ENCODE measurements at regions of chr12 and their contacts with region 1.

Region 1: DNA sequence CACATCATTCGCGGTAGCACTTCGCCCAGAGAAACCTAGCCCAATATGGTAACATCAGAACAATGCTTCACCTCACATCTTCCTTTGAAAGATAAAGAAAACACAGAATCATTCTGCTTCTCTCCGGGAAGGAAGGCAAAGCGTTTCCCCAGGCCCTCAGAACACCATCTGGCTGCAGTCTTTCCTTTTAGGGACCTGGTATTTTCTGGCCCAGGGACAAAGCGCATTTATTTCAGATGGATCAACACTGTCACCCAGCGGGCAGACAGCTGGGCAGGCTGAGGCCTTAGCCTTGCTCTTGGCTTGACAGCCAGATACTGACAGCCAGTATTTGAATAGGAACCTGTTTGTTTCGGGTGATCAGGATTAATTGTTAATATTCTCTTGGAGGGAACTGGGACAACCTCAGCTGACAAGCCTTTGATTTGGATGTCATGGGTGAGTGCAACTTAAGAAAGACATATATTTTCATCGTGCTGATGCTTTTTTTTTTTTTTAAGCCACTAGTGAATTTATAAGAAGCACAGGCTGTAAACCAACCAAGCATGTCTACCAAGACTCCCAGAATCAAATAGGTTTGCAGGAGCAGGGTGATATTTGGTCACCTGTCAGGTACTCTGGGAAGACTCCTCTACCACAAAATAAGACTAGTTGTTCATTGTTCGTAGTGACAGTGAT is 118.9 kb downstream of the VEZT start:
- DNase-seq: peak; percentile 84
- H3K4me3 ChIP-seq: no peak overlapping the region
- H3K27ac ChIP-seq: peak overlapping the region; percentile 36 to 57
- H3K4me1 ChIP-seq: no peaks in the 10 kb centered on the region
- H3K27me3 ChIP-seq: no peaks in the 10 kb centered on the region
- CTCF ChIP-seq: peak; percentile 84 to 97 (median 87)
- POLR2A ChIP-seq: no peak

Region 2: DNA sequence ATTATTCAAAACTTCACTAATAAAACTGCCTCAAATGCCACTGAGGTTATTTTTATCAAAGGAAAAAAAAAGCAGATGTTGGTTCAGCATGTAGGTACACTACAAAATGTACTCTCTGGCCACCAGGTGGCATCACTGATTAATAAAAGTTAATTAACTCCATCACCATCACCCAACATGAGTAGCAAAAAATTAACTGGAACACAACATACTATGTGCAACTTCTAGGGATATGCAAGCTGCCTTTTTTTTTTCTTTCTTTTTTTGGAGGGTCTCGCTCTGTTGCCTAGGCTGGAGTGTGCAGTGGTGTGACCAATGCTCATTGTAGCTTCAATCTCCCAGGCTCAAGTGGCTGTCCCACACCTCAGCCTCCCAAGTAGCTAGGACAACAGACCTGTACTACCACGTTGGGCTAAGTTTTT is 219.3 kb before region 1 on chr12:
- intact Hi-C with region 1: loop called (anchors 2 kb)
- DNase-seq: peak; percentile 78
- H3K4me3 ChIP-seq: no peak overlapping the region
- H3K27ac ChIP-seq: peak overlapping the region; percentile 30 to 36
- H3K4me1 ChIP-seq: peaks cover 3% of the 10 kb centered on the region
- H3K27me3 ChIP-seq: no peaks in the 10 kb centered on the region
- CTCF ChIP-seq: peak; percentile 47 to 93 (median 88)
- POLR2A ChIP-seq: no peak

Region 3: GRCh38 chr12:95277139-95277538 is 59.4 kb before region 1 on chr12:
- intact Hi-C with region 1: no loop called
- DNase-seq: no peak
- H3K4me3 ChIP-seq: no peak overlapping the region
- H3K27ac ChIP-seq: no peak overlapping the region
- H3K4me1 ChIP-seq: no peaks in the 10 kb centered on the region
- H3K27me3 ChIP-seq: no peaks in the 10 kb centered on the region
- CTCF ChIP-seq: no peak
- POLR2A ChIP-seq: no peak

Region 4: DNA sequence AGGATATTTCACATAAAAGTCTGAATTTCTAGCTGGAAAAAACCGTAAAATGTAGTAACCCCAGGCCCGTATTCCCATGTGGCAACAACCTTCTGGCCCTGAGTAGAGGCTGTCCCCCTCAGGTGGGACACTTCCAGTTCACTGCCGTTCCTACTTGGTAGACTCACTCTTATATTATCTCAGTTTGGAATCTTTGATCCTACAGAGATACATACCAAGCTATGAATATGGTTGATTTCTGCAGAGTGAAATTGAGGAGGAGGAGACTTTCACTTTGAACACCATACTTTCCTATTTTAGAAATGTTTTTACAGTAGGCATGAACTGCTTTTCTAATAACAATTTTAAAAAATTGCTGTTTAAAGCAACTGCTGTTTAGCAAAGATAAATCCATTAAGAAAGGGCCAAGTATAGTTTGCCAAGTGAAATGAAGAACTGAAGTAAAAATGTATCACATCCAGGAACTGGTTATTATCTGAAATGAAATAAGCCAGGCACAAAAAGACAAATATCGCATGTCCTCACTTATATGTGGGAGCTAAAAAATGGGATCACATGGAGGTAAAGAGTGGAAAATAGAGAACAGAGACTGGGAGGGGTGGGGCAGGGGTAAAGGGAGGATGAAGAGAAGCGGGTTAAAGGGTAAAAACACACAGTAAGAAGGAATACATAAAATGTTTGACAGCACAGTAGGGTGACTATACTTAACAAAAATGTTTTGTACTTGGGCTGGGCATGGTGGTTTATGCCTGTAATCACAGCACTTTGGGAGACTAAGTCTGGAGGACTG is 44.7 kb after region 1 on chr12:
- intact Hi-C with region 1: loop called (anchors 5 kb)
- DNase-seq: no peak
- H3K4me3 ChIP-seq: no peak overlapping the region
- H3K27ac ChIP-seq: no peak overlapping the region
- H3K4me1 ChIP-seq: no peaks in the 10 kb centered on the region
- H3K27me3 ChIP-seq: no peaks in the 10 kb centered on the region
- CTCF ChIP-seq: no peak
- POLR2A ChIP-seq: no peak

Region 5: GRCh38 chr12:95538656-95539055 is 202.1 kb after region 1 on chr12:
- intact Hi-C with region 1: loop called (anchors 5 kb)
- DNase-seq: no peak
- H3K4me3 ChIP-seq: no peak overlapping the region
- H3K27ac ChIP-seq: no peak overlapping the region
- H3K4me1 ChIP-seq: no peaks in the 10 kb centered on the region
- H3K27me3 ChIP-seq: no peaks in the 10 kb centered on the region
- CTCF ChIP-seq: no peak
- POLR2A ChIP-seq: no peak

Measured in prostate gland (tissue), 2 donors.